ENCODE measurements at regions of chr5 and their contacts with region 1.

Region 1: GRCh38 chr5:71601222-71602041 is 14.3 kb downstream of the MCCC2 start:
- DNase-seq: peak; percentile 99
- H3K4me3 ChIP-seq: no peak overlapping the region
- H3K27ac ChIP-seq: peak overlapping the region; percentile 83
- H3K4me1 ChIP-seq: peaks cover 30% of the 10 kb centered on the region
- H3K27me3 ChIP-seq: no peaks in the 10 kb centered on the region
- CTCF ChIP-seq: peak; percentile 70 to 81
- POLR2A ChIP-seq: peak; percentile 29

Region 2: DNA sequence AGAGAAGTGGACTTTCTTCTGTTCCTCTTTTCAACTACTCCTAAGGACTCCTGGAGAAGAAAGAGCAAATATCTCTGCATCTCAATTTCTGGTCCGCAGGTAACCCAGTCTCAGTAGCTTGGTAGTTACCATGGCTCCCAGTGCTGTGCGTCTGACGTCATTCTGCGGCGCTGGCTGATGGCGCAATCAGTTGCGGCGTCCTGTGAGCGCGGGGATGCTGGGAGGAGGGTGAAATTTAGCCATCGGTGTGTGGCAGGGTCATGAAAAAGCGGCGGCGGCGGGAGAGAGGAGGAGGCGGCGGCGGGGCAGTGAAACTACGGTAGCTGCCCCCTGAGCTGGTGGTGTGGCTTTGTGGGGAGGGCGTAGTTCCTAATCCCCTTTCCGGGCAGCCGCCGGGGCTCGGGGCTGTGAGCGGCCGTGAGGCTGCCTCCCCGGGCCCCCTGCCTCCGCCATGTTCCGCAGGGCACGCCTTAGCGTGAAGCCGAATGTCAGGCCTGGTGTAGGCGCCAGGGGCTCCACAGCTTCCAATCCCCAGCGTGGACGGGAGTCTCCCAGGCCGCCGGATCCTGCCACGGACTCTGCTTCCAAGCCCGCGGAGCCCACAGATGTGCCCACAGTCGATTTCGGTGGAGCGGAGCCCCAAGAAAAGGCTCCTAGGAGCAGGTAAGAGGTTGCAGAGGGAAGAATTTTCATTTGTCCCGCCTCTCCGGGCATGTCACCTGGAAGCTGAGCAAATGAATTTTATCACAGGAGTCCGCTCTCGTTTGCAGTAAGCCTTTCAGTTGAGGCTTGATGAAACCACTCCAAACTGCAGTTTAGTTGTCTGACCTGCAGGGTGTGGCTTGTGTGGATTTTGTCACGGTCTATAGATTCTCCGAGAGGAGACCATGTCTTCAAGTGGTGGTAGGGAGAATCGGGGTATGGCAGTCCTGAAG is 145.7 kb before region 1 on chr5 and contains the start of gene BDP1:
- CTCF ChIA-PET with region 1: no interaction called
- POLR2A ChIA-PET with region 1: no interaction called
- dilution Hi-C with region 1: no loop called
- intact Hi-C with region 1: loop called (anchors 5 kb)
- DNase-seq: peak; percentile 95
- H3K4me3 ChIP-seq: peak within 1 kb of the TSS; percentile 89 to 99 (median 97)
- H3K27ac ChIP-seq: peak within 1 kb of the TSS; percentile 74
- H3K4me1 ChIP-seq: peaks cover 14% of the 10 kb centered on the region
- H3K27me3 ChIP-seq: peaks cover under 1 to 6% of the 10 kb centered on the region in 2 experiments
- CTCF ChIP-seq: peak in 1 of 2 donors; percentile 27
- POLR2A ChIP-seq: peak; percentile 63
- total RNA-seq, gene BDP1: 25.2 and 27.5 TPM in 2 replicates

Region 3: GRCh38 chr5:71482132-71482531 is 119.3 kb before region 1 on chr5:
- CTCF ChIA-PET with region 1: interaction called, 5 read pairs
- POLR2A ChIA-PET with region 1: no interaction called
- dilution Hi-C with region 1: no loop called
- intact Hi-C with region 1: loop called (anchors 2 kb)
- DNase-seq: peak; percentile 91
- H3K4me3 ChIP-seq: no peak overlapping the region
- H3K27ac ChIP-seq: peak overlapping the region; percentile 91
- H3K4me1 ChIP-seq: peaks cover 33% of the 10 kb centered on the region
- H3K27me3 ChIP-seq: no peaks in the 10 kb centered on the region
- CTCF ChIP-seq: no peak
- POLR2A ChIP-seq: no peak

Region 4: DNA sequence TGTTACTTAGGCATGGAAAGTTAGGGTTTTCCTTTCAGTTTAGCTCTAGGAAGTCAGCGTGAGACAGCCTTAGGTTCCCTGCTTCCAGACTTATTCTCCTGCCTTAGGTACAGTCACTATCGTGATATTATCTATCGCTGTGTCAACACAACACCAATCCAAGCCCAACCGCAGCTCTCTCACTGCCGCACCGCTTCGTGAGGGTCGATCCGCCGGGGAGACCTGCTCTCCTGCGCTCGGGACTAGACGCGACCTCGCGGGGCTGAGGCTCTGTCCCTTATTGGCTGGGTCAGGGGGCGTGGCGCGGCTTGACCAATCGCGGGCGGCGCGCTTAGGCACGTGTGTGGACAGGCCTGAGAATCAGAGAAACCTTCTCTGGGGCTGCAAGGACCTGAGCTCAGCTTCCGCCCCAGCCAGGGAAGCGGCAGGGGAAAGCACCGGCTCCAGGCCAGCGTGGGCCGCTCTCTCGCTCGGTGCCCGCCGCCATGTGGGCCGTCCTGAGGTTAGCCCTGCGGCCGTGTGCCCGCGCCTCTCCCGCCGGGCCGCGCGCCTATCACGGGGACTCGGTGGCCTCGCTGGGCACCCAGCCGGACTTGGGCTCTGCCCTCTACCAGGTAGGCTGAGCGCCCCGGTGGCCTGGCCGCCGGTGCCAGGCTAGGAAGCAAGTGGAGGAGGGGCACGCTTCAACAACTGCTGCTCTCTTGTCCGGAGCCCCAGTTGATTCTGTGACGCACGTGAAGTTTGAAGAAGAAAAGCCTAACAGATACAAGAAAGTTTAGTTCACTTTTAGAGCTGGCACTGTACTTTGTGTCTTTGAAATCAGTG is 14.3 kb before region 1 on chr5 and contains the start of gene MCCC2:
- CTCF ChIA-PET with region 1: interaction called, 31 read pairs
- POLR2A ChIA-PET with region 1: interaction called, 8 read pairs
- dilution Hi-C with region 1: no loop called
- intact Hi-C with region 1: loop called (anchors 2 kb)
- DNase-seq: peak; percentile 97
- H3K4me3 ChIP-seq: peak within 1 kb of the TSS; percentile 61 to 75 (median 63)
- H3K27ac ChIP-seq: peak within 1 kb of the TSS; percentile 46
- H3K4me1 ChIP-seq: peaks cover 3% of the 10 kb centered on the region
- H3K27me3 ChIP-seq: no peaks in the 10 kb centered on the region
- CTCF ChIP-seq: no peak
- POLR2A ChIP-seq: peak; percentile 61
- total RNA-seq, gene MCCC2: 27.8 and 28.6 TPM in 2 replicates

Region 5: GRCh38 chr5:71701407-71701806 is 100.0 kb after region 1 on chr5:
- CTCF ChIA-PET with region 1: interaction called, 5 read pairs
- POLR2A ChIA-PET with region 1: no interaction called
- dilution Hi-C with region 1: no loop called
- intact Hi-C with region 1: loop called (anchors 1 kb)
- DNase-seq: no peak
- H3K4me3 ChIP-seq: no peak overlapping the region
- H3K27ac ChIP-seq: no peak overlapping the region
- H3K4me1 ChIP-seq: peaks cover 29% of the 10 kb centered on the region
- H3K27me3 ChIP-seq: peaks cover 26 to 27% of the 10 kb centered on the region in 2 experiments
- CTCF ChIP-seq: no peak
- POLR2A ChIP-seq: no peak

Region 6: DNA sequence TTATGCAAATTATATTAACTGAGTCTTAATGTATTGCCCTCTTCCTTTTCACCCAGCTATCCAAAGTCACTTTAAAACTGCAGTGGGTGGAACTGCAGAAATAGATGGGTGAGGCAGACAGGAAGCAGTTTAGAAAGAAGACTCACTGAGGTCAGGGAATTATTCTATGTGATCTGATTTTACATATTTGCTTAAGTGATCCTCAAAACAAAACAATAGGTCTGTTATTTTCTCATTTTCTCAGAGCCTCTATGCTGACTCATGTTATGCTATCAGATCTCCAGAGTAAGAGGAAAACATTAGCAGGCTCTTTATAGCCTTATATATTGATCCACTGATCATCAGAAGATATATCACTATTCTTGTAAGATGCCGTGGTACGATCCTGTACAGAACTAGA is 655.1 kb after region 1 on chr5:
- CTCF ChIA-PET with region 1: no interaction called
- POLR2A ChIA-PET with region 1: no interaction called
- dilution Hi-C with region 1: no loop called
- intact Hi-C with region 1: no loop called
- DNase-seq: peak; percentile 72
- H3K4me3 ChIP-seq: no peak overlapping the region
- H3K27ac ChIP-seq: peak overlapping the region; percentile 13
- H3K4me1 ChIP-seq: peaks cover 60% of the 10 kb centered on the region
- H3K27me3 ChIP-seq: no peaks in the 10 kb centered on the region
- CTCF ChIP-seq: no peak
- POLR2A ChIP-seq: no peak